A673 (cell line): ENCODE measurements at regions of chr2 and their contacts with region 1.

Region 1: GRCh38 chr2:8681786-8682692 is at the start of gene ID2:
- DNase-seq: peak; percentile 100
- H3K4me3 ChIP-seq: peak within 1 kb of the TSS; percentile 87
- H3K27ac ChIP-seq: peak within 1 kb of the TSS; percentile 100
- H3K4me1 ChIP-seq: peaks cover 33% of the 10 kb centered on the region
- H3K27me3 ChIP-seq: no peaks in the 10 kb centered on the region
- CTCF ChIP-seq: no peak
- total RNA-seq, gene ID2: 235 and 249 TPM in 2 replicates

Region 2: DNA sequence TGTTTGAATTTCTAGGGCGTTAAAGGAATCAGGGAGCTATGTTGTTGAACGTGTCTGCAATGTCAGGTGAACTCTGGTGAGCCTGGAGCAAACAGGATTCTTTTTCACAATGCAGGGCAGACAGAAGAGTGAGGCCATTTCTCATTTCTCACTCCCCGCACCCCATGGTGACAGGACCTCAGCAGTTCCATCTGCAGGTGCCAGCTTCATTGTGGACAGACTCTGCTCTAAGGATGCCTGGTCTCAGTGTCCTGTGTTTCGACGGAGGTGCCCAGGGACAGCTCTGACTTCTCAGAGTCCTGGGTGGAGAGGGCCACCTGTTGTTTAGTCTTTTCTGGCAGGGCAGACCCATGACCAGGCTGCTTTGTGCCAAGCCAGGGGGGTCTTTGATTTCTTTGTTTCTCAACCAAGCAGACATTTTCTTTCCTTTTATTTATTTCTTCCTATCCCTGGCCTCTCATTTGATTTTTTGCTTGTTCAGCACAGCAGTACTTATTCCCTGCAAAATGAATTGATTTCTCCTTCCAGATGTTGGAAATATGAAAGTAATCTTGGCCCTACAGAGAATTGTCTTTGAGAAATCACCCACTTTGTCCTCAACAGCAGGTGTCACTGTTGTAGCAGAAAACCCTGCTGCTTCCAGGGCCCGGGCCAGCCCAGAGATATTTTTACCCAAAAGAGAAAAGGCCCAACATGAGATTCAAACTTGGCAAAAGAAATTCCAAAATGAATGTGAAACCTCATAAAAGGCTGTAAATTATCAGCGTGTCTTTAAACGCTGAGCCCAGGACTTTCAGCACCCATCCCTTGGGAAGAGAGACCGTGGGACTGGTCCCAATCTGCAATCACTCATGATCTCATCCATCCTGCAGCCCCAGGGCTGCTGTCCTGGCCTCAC is 1563.2 kb before region 1 on chr2:
- CTCF ChIA-PET with region 1: no interaction called
- POLR2A ChIA-PET with region 1: no interaction called
- intact Hi-C with region 1: loop called (anchors 5 kb)
- DNase-seq: peak; percentile 83
- H3K4me3 ChIP-seq: no peak overlapping the region
- H3K27ac ChIP-seq: peak overlapping the region; percentile 72
- H3K4me1 ChIP-seq: peaks cover 19% of the 10 kb centered on the region
- H3K27me3 ChIP-seq: no peaks in the 10 kb centered on the region
- CTCF ChIP-seq: peak; percentile 84

Region 3: GRCh38 chr2:7203055-7203467 is 1479.0 kb before region 1 on chr2:
- CTCF ChIA-PET with region 1: interaction called, 3 read pairs
- POLR2A ChIA-PET with region 1: no interaction called
- intact Hi-C with region 1: loop called (anchors 5 kb)
- DNase-seq: peak; percentile 83
- H3K4me3 ChIP-seq: no peak overlapping the region
- H3K27ac ChIP-seq: peak overlapping the region; percentile 75
- H3K4me1 ChIP-seq: peaks cover 43% of the 10 kb centered on the region
- H3K27me3 ChIP-seq: no peaks in the 10 kb centered on the region
- CTCF ChIP-seq: peak; percentile 95

Region 4: DNA sequence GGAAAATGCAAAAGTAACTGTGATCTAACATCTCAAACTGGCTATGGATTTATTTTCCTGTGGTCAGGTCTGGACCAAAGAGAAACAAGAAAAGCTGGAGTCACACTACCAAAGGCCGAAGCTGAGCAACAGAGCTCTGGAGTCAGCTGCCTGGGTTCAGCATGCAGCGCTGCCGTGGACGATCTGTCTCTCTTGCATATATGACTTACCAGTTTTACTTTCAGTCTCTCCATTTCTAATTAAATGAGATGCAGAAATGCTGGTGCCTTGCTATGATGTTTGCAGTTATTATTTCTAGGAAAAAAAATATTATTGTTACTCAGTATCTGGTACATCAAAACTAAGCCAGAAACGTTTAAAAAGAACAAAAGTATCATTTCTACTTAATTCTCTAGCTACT is 951.6 kb before region 1 on chr2:
- CTCF ChIA-PET with region 1: no interaction called
- POLR2A ChIA-PET with region 1: no interaction called
- intact Hi-C with region 1: loop called (anchors 5 kb)
- DNase-seq: no peak
- H3K4me3 ChIP-seq: no peak overlapping the region
- H3K27ac ChIP-seq: no peak overlapping the region
- H3K4me1 ChIP-seq: peaks cover 6% of the 10 kb centered on the region
- H3K27me3 ChIP-seq: no peaks in the 10 kb centered on the region
- CTCF ChIP-seq: no peak

Region 5: DNA sequence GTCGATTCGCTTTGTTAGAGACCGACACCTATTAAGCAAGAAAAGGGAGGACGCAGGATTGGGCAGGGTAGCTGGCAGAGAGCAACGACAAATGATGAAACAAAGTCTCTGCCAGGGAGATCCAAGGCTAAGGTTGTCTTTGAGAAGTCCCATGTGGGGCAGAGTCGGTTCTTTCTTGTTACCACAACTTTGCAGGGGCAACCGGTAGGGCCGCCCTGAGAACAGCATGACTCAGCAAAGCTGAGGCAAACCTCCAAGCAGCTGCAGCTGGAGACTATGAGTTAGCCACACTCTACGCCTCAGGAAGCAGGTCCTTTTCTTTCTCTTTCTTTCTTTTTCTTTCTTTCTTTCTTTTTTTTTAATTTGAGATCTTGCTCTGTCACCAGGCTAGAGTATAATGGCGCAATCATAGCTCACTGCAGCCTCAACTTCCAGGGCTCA is 452.5 kb before region 1 on chr2:
- CTCF ChIA-PET with region 1: no interaction called
- POLR2A ChIA-PET with region 1: no interaction called
- intact Hi-C with region 1: loop called (anchors 10 kb)
- DNase-seq: peak; percentile 18
- H3K4me3 ChIP-seq: no peak overlapping the region
- H3K27ac ChIP-seq: no peak overlapping the region
- H3K4me1 ChIP-seq: no peaks in the 10 kb centered on the region
- H3K27me3 ChIP-seq: no peaks in the 10 kb centered on the region
- CTCF ChIP-seq: no peak

Region 6: DNA sequence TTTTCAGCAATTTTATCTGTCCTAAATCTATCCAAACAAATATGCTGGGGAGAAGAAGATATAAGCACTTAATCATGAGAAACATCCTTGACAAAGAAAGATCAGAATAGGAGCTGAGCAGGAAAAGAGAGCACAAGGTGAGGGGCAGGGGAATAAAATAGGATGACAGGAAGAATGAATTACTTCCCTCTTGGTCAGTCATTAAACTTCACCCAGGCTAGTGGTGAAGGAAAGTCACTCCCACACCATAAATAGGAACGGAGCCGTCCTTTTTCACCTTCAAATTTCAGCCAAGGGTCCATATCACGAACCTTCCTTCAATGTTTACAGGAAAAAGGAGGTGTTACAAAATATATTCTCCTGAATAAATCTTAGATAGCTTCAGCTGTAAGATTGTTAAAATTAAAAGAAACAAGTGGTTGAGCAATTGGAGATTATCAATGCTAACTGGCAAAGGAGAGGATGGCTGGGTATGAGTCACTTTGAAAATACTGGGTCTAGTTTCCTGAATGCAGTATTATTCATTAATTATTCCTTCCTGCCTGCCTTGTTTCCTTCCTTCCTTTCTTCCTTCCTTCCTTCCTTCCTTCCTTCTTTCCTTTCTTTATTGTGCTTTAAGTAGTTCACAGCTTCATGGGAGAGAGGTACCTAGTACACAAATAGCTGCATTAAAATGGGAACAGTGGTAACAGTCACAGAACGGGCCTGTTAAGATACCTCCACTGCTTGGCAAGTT is 292.5 kb before region 1 on chr2:
- CTCF ChIA-PET with region 1: no interaction called
- POLR2A ChIA-PET with region 1: no interaction called
- intact Hi-C with region 1: loop called (anchors 2 kb)
- DNase-seq: peak; percentile 95
- H3K4me3 ChIP-seq: peak overlapping the region; percentile 2
- H3K27ac ChIP-seq: peak overlapping the region; percentile 95
- H3K4me1 ChIP-seq: peaks cover 44% of the 10 kb centered on the region
- H3K27me3 ChIP-seq: no peaks in the 10 kb centered on the region
- CTCF ChIP-seq: no peak

Region 7: DNA sequence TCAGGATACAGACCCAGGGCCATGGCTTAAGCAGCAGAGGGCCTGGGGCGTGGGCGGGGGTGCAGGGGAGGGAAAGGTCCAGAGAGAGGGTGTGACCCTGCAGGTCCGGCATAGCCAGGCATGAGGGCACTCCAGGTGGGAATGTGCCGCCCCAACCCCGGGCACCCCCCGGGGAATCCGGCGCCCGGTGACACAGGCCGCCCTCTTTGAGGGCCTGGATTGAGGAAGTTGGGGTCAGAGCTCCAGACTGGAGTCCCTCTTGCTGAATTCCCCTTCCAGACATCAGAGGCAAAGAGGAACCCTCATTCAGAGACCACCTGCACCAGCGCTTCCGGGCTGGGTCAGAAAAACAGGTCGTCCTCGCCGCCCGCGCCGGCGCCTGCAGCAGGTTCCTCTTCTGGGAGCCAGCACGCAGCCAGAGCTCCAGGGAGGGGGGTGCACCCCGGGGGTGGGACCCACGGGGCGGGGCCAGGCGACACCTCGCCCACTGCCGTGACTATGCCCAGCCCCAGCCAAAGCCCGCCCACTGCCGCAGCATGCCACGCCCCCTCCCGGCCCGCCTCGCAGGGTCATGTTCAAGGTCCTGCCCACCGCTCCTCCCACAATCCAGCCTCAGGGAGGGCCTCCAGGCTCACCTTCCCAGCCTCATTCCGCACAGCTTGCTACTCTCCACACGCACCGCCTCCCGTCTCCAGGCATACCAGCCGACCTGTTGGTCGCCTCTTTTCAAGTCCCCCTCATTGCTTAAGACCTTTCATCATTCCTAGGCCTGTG is 98.5 kb before region 1 on chr2:
- CTCF ChIA-PET with region 1: interaction called, 3 read pairs
- POLR2A ChIA-PET with region 1: interaction called, 4 read pairs
- intact Hi-C with region 1: loop called (anchors 5 kb)
- DNase-seq: peak; percentile 95
- H3K4me3 ChIP-seq: peak overlapping the region; percentile 31
- H3K27ac ChIP-seq: peak overlapping the region; percentile 51
- H3K4me1 ChIP-seq: peaks cover 16% of the 10 kb centered on the region
- H3K27me3 ChIP-seq: no peaks in the 10 kb centered on the region
- CTCF ChIP-seq: no peak

Region 8: GRCh38 chr2:8621072-8621382 is 61.0 kb before region 1 on chr2:
- CTCF ChIA-PET with region 1: no interaction called
- POLR2A ChIA-PET with region 1: no interaction called
- intact Hi-C with region 1: no loop called
- DNase-seq: no peak
- H3K4me3 ChIP-seq: no peak overlapping the region
- H3K27ac ChIP-seq: no peak overlapping the region
- H3K4me1 ChIP-seq: no peaks in the 10 kb centered on the region
- H3K27me3 ChIP-seq: no peaks in the 10 kb centered on the region
- CTCF ChIP-seq: no peak